ENCODE measurements at regions of chr15 and their contacts with region 1.

Region 1: GRCh38 chr15:96585484-96586386 is 255.2 kb downstream of the NR2F2 start:
- DNase-seq: no peak
- ATAC-seq: no peak

Region 2: DNA sequence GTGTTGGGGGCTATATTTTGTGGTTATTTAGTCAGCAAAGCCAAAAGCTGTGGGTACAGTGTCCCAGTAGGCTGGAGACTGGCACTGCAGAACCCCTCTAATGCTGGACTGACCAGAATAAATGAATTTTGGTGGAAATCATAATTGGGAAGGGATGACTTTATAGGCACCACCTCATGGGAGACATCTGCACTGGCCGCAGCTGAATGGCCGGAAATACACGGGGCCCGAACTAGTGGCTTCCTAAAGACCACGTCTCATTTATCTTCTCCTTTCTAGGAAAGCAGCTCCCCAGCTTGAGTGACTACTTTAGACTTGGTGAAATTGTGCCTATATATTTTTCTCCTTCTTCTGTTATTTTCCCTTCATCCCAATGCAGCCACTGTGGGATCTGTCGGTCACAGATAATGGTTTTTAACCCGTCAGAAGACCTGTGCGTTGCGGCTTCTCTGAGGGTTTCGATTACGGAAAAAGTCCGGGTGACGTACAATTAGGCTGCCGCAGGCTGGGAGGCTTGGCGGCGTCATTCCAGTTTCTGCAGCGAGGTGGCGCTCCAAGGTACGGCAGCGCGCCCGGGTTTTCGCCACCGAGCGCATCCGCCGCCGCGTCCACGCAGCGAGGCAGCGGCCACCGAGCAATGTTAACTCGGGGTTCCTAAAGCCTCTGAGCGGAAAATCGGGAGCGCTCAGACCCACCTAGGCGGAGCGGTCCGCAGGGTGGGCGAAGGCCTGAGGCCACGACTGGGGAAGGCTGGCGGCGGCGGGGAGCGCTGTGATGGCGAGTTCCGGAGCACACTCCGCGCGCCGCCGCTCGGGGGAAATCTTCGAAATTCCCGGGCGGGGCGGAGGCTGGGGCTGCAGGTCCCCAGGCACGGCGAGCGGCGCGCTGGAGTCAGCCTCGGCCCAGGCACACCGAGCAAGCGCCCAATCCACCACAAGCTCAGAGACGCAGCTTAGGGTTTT is 229.0 kb before region 1 on chr15:
- intact Hi-C with region 1: loop called (anchors 10 kb)
- DNase-seq: peak; percentile 89
- ATAC-seq: peak; percentile 78

Region 3: DNA sequence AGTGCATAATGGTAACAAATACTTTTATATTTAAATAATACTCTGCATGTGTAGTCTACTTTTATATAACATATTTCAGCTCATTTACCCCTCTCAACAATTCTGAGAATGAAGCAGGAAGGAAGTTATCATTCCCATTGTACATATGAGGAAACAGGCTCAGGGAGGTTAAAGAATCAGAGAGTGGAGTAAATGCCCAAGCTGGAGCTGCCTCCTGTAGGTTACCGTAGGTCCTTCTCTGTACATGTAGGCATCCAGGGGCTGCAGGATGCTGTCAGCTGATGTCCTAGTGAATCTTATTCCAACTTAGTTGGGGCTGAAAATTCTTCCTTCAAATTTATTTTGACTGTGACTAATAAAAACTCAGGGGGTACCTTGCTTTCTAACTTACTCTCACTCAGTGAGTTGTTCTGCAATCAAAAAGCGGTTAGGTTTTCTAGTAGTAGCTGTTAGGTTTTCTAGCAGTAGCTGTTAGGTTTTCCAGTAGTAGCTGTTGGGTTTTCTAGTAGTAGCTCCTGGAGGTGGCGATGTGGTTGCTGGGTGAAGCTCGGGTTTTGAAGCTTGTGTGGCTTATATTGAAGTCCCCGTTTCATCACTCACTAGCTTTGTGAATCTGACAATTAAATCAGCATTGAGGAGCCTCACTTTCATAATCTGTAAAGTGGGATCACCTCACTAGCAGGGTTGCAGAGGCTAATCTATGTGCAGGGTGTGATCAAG is 101.8 kb after region 1 on chr15:
- intact Hi-C with region 1: no loop called
- DNase-seq: no peak
- ATAC-seq: no peak

Region 4: DNA sequence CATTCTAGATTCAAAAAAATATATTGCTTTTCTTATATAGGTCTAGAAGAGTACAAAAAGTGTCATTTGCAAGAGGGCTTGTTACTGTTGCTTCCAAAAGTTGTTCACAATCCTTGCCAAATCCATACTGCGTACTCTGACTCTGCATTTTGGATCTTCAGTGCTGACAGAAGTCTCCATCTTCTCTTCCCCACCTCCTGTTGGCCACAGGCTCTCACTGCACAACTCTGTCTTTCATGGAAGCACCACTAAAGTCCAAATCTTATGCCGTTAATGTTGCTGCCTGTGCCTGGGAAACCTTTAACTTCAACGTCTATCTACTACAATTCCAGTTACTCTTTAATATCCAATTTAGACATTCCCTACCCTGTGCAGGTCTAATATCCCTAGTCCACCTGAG is 164.6 kb after region 1 on chr15:
- intact Hi-C with region 1: no loop called
- DNase-seq: no peak
- ATAC-seq: no peak

Measured in Right ventricle myocardium superior (tissue), 1 donor.